ENCODE measurements at regions of chr6 and their contacts with region 1.

Region 1: DNA sequence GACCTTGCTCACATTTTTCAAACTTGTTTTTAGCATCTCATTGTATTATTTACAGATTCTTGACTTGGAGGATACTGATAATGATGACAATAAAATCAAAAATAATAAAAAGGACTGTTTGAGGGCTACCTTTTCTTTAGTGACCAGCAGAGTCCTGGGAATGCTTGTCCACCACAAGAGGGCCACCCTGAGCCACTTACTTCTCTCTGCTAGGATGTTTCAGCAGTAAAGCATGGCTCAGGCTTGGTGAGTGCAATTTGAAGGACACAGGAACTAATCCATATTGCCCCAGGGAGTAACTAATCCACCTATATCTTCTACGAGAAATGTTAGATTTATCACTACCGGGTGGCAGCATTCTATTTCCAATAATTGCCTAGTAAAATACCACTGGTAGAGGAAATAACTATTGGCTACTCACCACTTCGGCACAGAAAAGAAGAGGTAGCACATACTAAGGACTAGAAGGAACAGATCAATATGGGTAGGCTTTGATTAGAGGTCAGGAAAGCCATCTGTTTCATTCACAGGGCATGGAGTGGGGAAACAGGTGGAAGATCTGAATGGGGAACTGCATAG is 5.8 kb upstream of the KIAA0408 start:
- DNase-seq: peak; percentile 31
- H3K4me3 Mint-ChIP-seq: no peak overlapping the region
- H3K27ac Mint-ChIP-seq: no peak overlapping the region
- H3K4me1 Mint-ChIP-seq: peaks cover 25% of the 10 kb centered on the region
- H3K27me3 Mint-ChIP-seq: no peaks in the 10 kb centered on the region

Region 2: GRCh38 chr6:127539272-127539671 is 74.3 kb after region 1 on chr6:
- intact Hi-C with region 1: loop called (anchors 1 kb)
- DNase-seq: no peak
- H3K4me3 Mint-ChIP-seq: no peak overlapping the region
- H3K27ac Mint-ChIP-seq: no peak overlapping the region
- H3K4me1 Mint-ChIP-seq: peaks cover 2% of the 10 kb centered on the region
- H3K27me3 Mint-ChIP-seq: peaks cover 22% of the 10 kb centered on the region

Region 3: GRCh38 chr6:127641905-127642304 is 176.9 kb after region 1 on chr6:
- intact Hi-C with region 1: loop called (anchors 2 kb)
- DNase-seq: no peak
- H3K4me3 Mint-ChIP-seq: no peak overlapping the region
- H3K27ac Mint-ChIP-seq: no peak overlapping the region
- H3K4me1 Mint-ChIP-seq: no peaks in the 10 kb centered on the region
- H3K27me3 Mint-ChIP-seq: peaks cover 5% of the 10 kb centered on the region

Region 4: GRCh38 chr6:127716465-127716864 is 251.5 kb after region 1 on chr6:
- intact Hi-C with region 1: no loop called
- DNase-seq: no peak
- H3K4me3 Mint-ChIP-seq: no peak overlapping the region
- H3K27ac Mint-ChIP-seq: no peak overlapping the region
- H3K4me1 Mint-ChIP-seq: no peaks in the 10 kb centered on the region
- H3K27me3 Mint-ChIP-seq: no peaks in the 10 kb centered on the region

Measured in activated T-helper 2 cell treated with anti-CD3 and anti-CD28 coated beads, Interferon-gamma antibody, Interleukin-2, Interleukin-4, amounts not matched to agents 10 μg/mL and 5 μg/mL and 100 μg/mL, durations not matched to agents 14 hours and 24 hours and 36 hours (primary cell).